Breast epithelium (tissue), 4 donors: ENCODE measurements at regions of chr12 and their contacts with region 1.

Region 1: DNA sequence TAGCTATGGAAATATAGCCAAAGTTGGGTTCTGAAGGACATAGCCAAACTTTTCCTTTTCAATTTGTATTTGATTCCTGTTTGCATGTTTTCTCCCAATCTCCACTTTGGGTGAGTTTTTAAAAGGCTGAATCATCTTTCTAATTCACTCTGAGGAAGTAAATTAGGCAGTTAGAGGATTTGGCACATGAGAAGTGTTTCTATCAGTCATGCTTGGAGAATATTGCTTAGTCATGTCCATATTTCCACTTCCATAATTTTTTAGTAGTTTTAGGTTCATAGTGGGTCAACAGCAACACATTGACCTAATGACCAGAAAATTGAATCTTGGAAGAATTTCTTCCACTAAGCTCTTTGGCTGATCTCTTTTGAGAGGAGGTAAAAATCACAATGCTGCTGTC is 21.8 kb downstream of the IRAK3 start:
- DNase-seq: no peak
- H3K4me3 ChIP-seq: no peak overlapping the region
- H3K27ac ChIP-seq: no peak overlapping the region
- H3K4me1 ChIP-seq: no peaks in the 10 kb centered on the region
- H3K27me3 ChIP-seq: no peaks in the 10 kb centered on the region
- CTCF ChIP-seq: no peak
- POLR2A ChIP-seq: no peak

Region 2: DNA sequence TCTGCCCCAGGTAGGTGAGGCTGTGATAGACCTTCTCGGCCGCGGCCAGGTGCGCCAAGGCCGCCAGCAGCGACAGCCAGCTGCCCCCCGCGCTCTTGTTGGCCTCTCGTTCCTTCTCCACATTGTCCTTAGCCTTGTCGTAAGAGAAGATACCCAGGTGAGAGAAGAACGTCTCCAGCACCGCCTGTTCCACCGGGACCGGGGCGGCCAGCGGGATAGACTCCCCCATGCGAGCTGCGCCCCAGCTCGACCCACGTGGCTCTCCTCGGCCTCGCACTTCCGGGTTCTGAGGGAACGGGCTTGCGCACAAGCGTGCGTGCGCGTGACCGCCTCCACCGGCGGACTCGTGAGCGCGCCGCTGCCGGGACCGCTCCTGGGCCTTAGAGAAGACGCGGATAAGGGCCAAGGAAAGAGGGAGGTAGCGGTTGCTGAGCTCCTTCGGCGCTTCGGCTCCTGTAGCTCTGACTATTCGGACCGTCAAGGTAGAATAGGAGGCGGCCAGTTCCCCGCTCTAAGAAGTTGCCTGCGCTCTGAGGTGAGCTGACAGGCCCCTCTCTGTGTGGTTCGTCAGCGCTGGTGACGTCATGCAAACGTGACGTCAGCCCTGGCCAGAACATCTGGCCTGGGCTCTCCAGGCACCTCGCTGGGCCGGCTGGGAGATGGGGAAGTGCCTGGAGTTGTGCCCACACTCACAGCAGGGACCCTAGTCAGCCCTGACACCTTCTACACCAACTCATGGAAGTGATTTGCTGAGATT is 1988.7 kb before region 1 on chr12 and contains the start of gene KICS2:
- intact Hi-C with region 1: no loop called
- DNase-seq: peak; percentile 89
- H3K4me3 ChIP-seq: peak within 1 kb of the TSS; percentile 78 to 96 (median 91)
- H3K27ac ChIP-seq: peak within 1 kb of the TSS; percentile 96 to 97
- H3K4me1 ChIP-seq: no peaks in the 10 kb centered on the region
- H3K27me3 ChIP-seq: no peaks in the 10 kb centered on the region
- CTCF ChIP-seq: peak in 1 of 3 donors; percentile 11
- POLR2A ChIP-seq: peak; percentile 93
- total RNA-seq, gene KICS2: 10.2 to 17.9 (median 15.7) TPM

Region 3: GRCh38 chr12:65156366-65156841 is 1054.4 kb before region 1 on chr12:
- intact Hi-C with region 1: no loop called
- DNase-seq: no peak
- H3K4me3 ChIP-seq: no peak overlapping the region
- H3K27ac ChIP-seq: no peak overlapping the region
- H3K4me1 ChIP-seq: no peaks in the 10 kb centered on the region
- H3K27me3 ChIP-seq: peaks cover 0 to under 1% of the 10 kb centered on the region in 2 donors
- CTCF ChIP-seq: no peak
- POLR2A ChIP-seq: no peak

Region 4: GRCh38 chr12:66169221-66170170 is 41.3 kb before region 1 on chr12 and contains the start of gene TMBIM4:
- intact Hi-C with region 1: no loop called
- DNase-seq: peak; percentile 74 to 88
- H3K4me3 ChIP-seq: peak within 1 kb of the TSS; percentile 76 to 89 (median 77)
- H3K27ac ChIP-seq: peak within 1 kb of the TSS; percentile 99
- H3K4me1 ChIP-seq: peaks cover 0 to 6% of the 10 kb centered on the region in 2 donors
- H3K27me3 ChIP-seq: no peaks in the 10 kb centered on the region
- CTCF ChIP-seq: peak; percentile 48 to 68 (median 60)
- POLR2A ChIP-seq: peak; percentile 80
- total RNA-seq, gene TMBIM4: 128 to 325 (median 218) TPM

Region 5: DNA sequence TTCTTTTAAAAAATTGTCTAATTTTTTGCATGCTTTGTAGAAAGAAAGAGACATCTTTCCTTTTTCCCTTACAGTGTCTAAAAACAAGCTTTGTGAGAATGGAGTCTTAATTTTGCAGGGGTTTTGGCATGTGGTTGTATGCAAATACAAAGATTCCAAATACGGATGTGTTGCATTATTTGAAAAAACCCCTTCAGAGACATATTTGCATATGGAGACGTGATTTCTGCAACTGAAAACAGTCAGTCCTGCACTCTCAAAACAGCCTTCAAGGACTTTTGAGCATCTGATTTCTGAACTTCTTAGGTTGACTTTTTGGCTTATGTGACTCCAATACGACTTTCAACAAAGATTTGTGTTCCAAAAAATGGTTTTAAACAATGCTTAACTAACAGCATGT is 14.0 kb before region 1 on chr12:
- intact Hi-C with region 1: no loop called
- DNase-seq: no peak
- H3K4me3 ChIP-seq: no peak overlapping the region
- H3K27ac ChIP-seq: no peak overlapping the region
- H3K4me1 ChIP-seq: no peaks in the 10 kb centered on the region
- H3K27me3 ChIP-seq: no peaks in the 10 kb centered on the region
- CTCF ChIP-seq: no peak
- POLR2A ChIP-seq: no peak

Region 6: GRCh38 chr12:66255737-66256136 is 44.9 kb after region 1 on chr12:
- intact Hi-C with region 1: loop called (anchors 2 kb)
- DNase-seq: no peak
- H3K4me3 ChIP-seq: no peak overlapping the region
- H3K27ac ChIP-seq: no peak overlapping the region
- H3K4me1 ChIP-seq: no peaks in the 10 kb centered on the region
- H3K27me3 ChIP-seq: no peaks in the 10 kb centered on the region
- CTCF ChIP-seq: no peak
- POLR2A ChIP-seq: no peak

Region 7: DNA sequence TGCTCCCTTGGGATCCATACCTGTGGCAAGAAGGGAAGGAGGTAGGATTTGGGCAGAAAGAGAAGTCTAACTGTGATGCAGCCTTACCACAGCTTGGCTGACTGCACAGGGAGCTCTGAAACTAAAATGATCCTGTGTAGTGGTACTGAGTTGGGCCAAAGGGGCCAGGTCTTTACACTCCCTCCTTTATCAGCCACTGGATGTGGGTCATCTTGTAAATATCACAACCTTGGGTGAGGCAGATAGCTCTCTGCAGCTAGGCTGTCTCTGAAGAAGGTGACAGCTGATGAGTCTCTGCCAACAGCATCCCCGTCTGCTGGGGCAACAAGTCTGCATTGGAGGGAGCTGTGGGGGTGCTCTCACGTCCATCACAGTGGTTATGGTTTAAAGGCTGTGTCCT is 962.4 kb after region 1 on chr12:
- intact Hi-C with region 1: loop called (anchors 5 kb)
- DNase-seq: no peak
- H3K4me3 ChIP-seq: no peak overlapping the region
- H3K27ac ChIP-seq: no peak overlapping the region
- H3K4me1 ChIP-seq: no peaks in the 10 kb centered on the region
- H3K27me3 ChIP-seq: no peaks in the 10 kb centered on the region
- CTCF ChIP-seq: no peak
- POLR2A ChIP-seq: no peak